Posterior vena cava (tissue), 2 donors: ENCODE measurements at regions of chr11 and their contacts with region 1.

Region 1: DNA sequence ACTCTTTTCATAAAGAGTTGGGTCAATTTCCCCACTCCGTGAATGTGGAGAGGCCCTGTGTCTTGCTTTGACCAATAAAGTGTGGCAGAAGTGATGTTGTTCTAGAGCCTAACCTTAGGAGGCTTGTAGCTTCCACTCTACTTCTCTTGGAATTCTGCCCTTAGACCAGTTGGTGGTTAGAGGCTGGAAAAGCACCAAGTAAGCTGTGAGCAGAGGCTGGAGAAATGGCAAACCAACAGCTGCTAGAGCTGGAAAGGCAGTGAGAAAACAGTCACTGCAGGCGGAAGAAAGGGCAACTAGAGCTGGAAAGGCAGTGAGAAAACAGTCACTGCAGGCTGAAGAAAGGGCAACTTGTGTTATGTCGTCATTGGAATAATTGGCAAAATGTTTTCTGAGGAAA is 29.8 kb upstream of the MSANTD2 start:
- DNase-seq: no peak

Region 2: DNA sequence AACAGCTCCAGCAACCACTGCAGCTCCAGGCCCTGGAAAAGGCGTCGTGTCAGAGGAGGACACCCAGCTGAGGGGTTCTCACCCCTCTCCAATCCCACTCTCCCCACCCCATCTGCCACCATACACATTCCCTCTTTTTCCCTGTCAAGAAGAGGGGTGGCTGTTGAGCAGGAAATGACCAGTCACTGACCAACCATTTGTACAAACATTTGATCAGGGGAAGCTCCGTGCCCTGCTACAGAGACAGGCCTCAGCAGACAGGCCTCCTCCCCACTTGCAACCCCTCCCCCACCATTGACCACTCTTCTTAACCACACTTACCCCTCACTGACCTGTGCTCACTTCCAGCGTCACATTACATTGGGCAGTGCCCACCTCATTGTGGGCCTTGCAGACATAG is 75.7 kb before region 1 on chr11:
- intact Hi-C with region 1: loop called in 1 of 2 experiments (anchors 2 kb)
- DNase-seq: no peak